OCI-LY7 (cell line): ENCODE measurements at regions of chr14 and their contacts with region 1.

Region 1: DNA sequence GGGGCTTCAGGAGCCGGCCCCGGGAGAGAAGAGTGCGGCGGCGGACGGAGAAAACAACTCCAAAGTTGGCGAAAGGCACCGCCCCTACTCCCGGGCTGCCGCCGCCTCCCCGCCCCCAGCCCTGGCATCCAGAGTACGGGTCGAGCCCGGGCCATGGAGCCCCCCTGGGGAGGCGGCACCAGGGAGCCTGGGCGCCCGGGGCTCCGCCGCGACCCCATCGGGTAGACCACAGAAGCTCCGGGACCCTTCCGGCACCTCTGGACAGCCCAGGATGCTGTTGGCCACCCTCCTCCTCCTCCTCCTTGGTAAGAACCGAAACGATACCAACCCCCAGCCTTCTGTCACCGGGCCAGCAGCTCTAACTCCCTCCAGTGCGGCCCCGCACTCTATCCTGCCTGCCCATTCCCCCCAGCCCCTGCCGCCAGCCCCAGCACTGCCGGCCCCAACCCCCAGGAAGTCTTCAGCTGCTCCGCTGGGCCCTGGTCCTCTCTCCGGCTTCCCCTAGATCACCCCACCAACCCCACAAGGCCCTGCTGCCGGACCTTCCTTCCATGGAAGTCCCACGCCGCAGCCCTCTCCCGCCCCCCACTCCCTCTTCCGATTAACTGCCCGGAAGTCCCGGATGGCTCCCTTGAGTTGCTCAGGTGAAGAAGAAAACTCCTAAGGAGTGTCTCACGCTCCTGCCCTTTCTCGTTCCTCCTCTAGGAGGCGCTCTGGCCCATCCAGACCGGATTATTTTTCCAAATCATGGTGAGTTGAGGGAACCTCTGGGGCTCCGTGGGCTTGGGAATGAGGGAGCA is 693 bp downstream of the LRP10 start:
- DNase-seq: peak; percentile 80
- H3K4me3 ChIP-seq: peak overlapping the region; percentile 86
- H3K27ac ChIP-seq: peak overlapping the region; percentile 93
- H3K4me1 ChIP-seq: peaks cover 31% of the 10 kb centered on the region
- CTCF ChIP-seq: peak; percentile 98

Region 2: GRCh38 chr14:22781586-22781991 is 90.6 kb before region 1 on chr14:
- CTCF ChIA-PET with region 1: no interaction called
- POLR2A ChIA-PET with region 1: no interaction called
- intact Hi-C with region 1: no loop called
- DNase-seq: no peak
- H3K4me3 ChIP-seq: no peak overlapping the region
- H3K27ac ChIP-seq: peak overlapping the region; percentile 33
- H3K4me1 ChIP-seq: peaks cover 53% of the 10 kb centered on the region
- CTCF ChIP-seq: no peak

Region 3: GRCh38 chr14:22900081-22900799 is 28.0 kb after region 1 on chr14:
- CTCF ChIA-PET with region 1: interaction called, 11 read pairs
- POLR2A ChIA-PET with region 1: interaction called, 6 read pairs
- intact Hi-C with region 1: loop called (anchors 1 kb)
- DNase-seq: peak; percentile 83
- H3K4me3 ChIP-seq: no peak overlapping the region
- H3K27ac ChIP-seq: peak overlapping the region; percentile 14
- H3K4me1 ChIP-seq: peaks cover 10% of the 10 kb centered on the region
- CTCF ChIP-seq: peak; percentile 82